Activated CD8-positive, alpha-beta T cell treated with anti-CD3 and anti-CD28 coated beads, Interleukin-2, amount 10 ng/mL, durations not matched to agents 7 days and 5 days (primary cell): ENCODE measurements at regions of chr3 and their contacts with region 1.

Region 1: GRCh38 chr3:62188681-62189383 is 184.5 kb downstream of the FEZF2 start:
- DNase-seq: peak; percentile 77
- ATAC-seq: peak; percentile 44
- H3K4me3 Mint-ChIP-seq: no peak overlapping the region
- H3K27ac Mint-ChIP-seq: no peak overlapping the region
- H3K4me1 Mint-ChIP-seq: peaks cover 5% of the 10 kb centered on the region
- H3K27me3 Mint-ChIP-seq: no peaks in the 10 kb centered on the region

Region 2: GRCh38 chr3:62090066-62090465 is 98.8 kb before region 1 on chr3:
- CTCF ChIA-PET with region 1: no interaction called
- POLR2A ChIA-PET with region 1: no interaction called
- DNase-seq: no peak
- ATAC-seq: no peak
- H3K4me3 Mint-ChIP-seq: no peak overlapping the region
- H3K27ac Mint-ChIP-seq: no peak overlapping the region
- H3K4me1 Mint-ChIP-seq: no peaks in the 10 kb centered on the region
- H3K27me3 Mint-ChIP-seq: no peaks in the 10 kb centered on the region

Region 3: GRCh38 chr3:62201438-62202035 is 12.7 kb after region 1 on chr3:
- CTCF ChIA-PET with region 1: interaction called, 14 read pairs
- POLR2A ChIA-PET with region 1: no interaction called
- DNase-seq: peak; percentile 22
- ATAC-seq: no peak
- H3K4me3 Mint-ChIP-seq: no peak overlapping the region
- H3K27ac Mint-ChIP-seq: no peak overlapping the region
- H3K4me1 Mint-ChIP-seq: no peaks in the 10 kb centered on the region
- H3K27me3 Mint-ChIP-seq: no peaks in the 10 kb centered on the region